Heart right ventricle (tissue), 16 donors: ENCODE measurements at regions of chr11 and their contacts with region 1.

Region 1: GRCh38 chr11:447923-448731 is 2.0 kb upstream of the PTDSS2 start:
- DNase-seq: peak; percentile 94 to 97
- ATAC-seq: peak; percentile 87 to 92 (median 89)
- H3K4me3 ChIP-seq: peak overlapping the region; percentile 39 to 75 (median 64)
- H3K27ac ChIP-seq: peak overlapping the region; percentile 85 to 96 (median 91)
- H3K4me1 ChIP-seq: peaks cover 20 to 46% (median 34%) of the 10 kb centered on the region in 9 donors
- H3K27me3 ChIP-seq: peaks cover 0 to 3% (median 0%) of the 10 kb centered on the region in 7 donors
- CTCF ChIP-seq: peak; percentile 62 to 97 (median 84)

Region 2: DNA sequence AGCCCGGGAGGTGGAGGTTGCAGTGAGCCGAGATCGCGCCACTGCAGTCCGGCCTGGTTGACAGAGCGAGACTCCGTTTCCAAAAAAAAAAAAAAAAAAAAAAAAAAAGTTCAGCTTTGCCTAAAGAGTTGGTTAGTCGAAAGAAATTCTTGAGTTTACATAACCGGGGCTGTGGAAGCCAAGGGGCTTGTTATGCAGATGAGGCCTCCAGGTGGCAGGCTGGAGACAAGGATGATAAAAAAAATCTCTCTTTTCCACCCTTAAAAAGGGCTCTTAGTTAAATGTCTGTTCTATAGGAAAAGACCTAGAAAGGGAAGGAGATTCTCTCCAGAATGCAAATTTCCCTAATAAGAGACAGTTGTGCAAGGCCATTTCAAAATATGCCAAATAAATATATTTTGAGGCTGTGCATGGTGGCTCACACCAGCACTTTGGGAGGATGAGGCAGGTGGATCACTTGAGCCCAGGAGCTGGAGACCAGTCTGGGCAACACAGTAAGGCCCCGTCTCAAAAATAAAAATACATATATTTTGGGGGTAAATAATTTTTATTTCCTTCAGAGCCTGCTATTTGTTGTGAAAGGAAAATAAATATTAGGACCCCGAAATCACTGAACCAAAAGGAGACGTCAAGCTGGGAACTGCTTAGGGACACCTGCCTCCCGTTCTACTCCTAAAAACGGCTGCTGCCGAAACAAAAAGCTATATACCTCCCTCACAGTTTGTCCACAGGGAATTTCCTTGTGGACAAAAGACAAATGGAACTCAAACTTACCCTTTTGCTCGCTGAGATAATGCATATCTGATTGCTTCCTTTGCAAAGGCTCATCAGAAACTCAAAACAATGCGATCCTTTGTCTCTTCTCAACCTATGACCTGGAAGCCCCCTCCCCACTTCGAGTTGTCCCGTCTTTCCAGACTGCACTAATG is 142.9 kb before region 1 on chr11:
- intact Hi-C with region 1: loop called in 1 of 10 experiments (anchors 5 kb)
- DNase-seq: peak; percentile 58 to 79
- ATAC-seq: peak in 5 of 8 donors; percentile 11 to 34 (median 24)
- H3K4me3 ChIP-seq: peak overlapping the region in 1 of 10 donors; percentile 9
- H3K27ac ChIP-seq: peak overlapping the region in 6 of 10 donors; percentile 15 to 97 (median 87)
- H3K4me1 ChIP-seq: peaks cover 5 to 51% (median 25%) of the 10 kb centered on the region in 9 donors
- H3K27me3 ChIP-seq: peaks cover 0 to 25% (median 6%) of the 10 kb centered on the region in 7 donors
- CTCF ChIP-seq: peak; percentile 47 to 79 (median 67)

Region 3: GRCh38 chr11:406978-407739 is 41.0 kb before region 1 on chr11:
- intact Hi-C with region 1: loop called in 5 of 10 experiments (anchors 2 to 5 kb)
- DNase-seq: peak; percentile 82 to 85
- ATAC-seq: peak; percentile 72 to 83 (median 76)
- H3K4me3 ChIP-seq: peak overlapping the region; percentile 56 to 85 (median 70)
- H3K27ac ChIP-seq: peak overlapping the region; percentile 70 to 89 (median 82)
- H3K4me1 ChIP-seq: peaks cover 6 to 24% (median 18%) of the 10 kb centered on the region in 9 donors
- H3K27me3 ChIP-seq: no peaks in the 10 kb centered on the region
- CTCF ChIP-seq: peak in 2 of 9 donors; percentile 1 to 2

Region 4: GRCh38 chr11:429391-429790 is 18.7 kb before region 1 on chr11:
- intact Hi-C with region 1: no loop called
- DNase-seq: peak in 1 of 2 donors; percentile 6
- ATAC-seq: no peak
- H3K4me3 ChIP-seq: no peak overlapping the region
- H3K27ac ChIP-seq: no peak overlapping the region
- H3K4me1 ChIP-seq: no peaks in the 10 kb centered on the region
- H3K27me3 ChIP-seq: peaks cover under 1 to 31% (median 11%) of the 10 kb centered on the region in 7 donors
- CTCF ChIP-seq: no peak

Region 5: DNA sequence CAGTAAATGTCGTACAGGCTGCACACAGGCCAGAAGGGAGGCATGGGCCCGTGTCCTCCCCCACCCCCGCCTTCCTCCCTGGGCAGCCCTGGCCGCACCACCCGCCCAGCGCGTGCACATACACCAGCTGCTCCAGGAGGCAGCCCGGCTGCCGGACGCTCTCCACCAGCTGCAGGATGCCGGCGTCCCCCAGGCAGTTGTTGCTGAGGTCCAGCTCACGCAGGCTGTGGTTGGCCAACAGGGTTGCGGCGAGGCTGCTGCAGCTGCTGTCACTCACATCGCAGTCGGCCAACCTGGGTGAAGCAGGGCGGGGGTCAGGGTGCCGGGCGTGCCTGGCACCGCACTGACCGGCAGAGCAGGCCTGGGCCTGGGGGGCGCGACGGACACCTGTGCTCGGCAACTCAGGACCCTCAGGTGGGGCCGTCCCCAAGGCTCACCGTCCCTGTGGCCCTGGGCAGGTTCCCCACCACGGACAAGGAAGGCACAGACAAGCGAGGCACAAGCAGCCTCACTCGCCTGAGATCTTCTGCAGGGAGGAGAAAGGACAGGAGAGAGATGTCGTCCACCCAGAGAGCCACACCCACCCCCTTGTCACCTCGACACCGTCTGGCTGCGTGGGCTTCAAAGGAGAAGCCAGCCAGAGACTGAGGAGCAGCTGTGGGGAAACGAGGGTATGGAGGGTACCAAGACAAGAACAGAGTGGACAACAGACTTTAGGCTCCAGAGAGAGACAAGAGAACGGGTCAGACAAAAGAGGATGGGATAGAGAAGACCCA is 46.8 kb after region 1 on chr11:
- intact Hi-C with region 1: loop called in 4 of 10 experiments (anchors 5 to 10 kb)
- DNase-seq: no peak
- ATAC-seq: no peak
- H3K4me3 ChIP-seq: no peak overlapping the region
- H3K27ac ChIP-seq: peak overlapping the region in 1 of 10 donors; percentile 48
- H3K4me1 ChIP-seq: peaks cover 2 to 38% (median 14%) of the 10 kb centered on the region in 9 donors
- H3K27me3 ChIP-seq: no peaks in the 10 kb centered on the region
- CTCF ChIP-seq: no peak

Region 6: GRCh38 chr11:518463-519250 is 70.5 kb after region 1 on chr11:
- intact Hi-C with region 1: loop called in 2 of 10 experiments (anchors 1 to 5 kb)
- DNase-seq: peak; percentile 88 to 89
- ATAC-seq: peak; percentile 96 to 98 (median 97)
- H3K4me3 ChIP-seq: peak overlapping the region in 8 of 10 donors; percentile 6 to 43 (median 32)
- H3K27ac ChIP-seq: peak overlapping the region in 9 of 10 donors; percentile 64 to 90 (median 79)
- H3K4me1 ChIP-seq: peaks cover 0 to 11% (median 5%) of the 10 kb centered on the region in 9 donors
- H3K27me3 ChIP-seq: no peaks in the 10 kb centered on the region
- CTCF ChIP-seq: peak in 8 of 9 donors; percentile 98 to 100 (median 100)